SK-N-SH (cell line): ENCODE measurements at regions of chr2 and their contacts with region 1.

Region 1: GRCh38 chr2:173448938-173449471 is 94.3 kb downstream of the CDCA7 start:
- DNase-seq: peak; percentile 77
- H3K4me3 ChIP-seq: peak overlapping the region; percentile 43 to 55
- H3K27ac ChIP-seq: peak overlapping the region in 1 of 2 experiments; percentile 73; a peak in 2 of 4 replicates
- H3K4me1 ChIP-seq: peaks cover 0 to 3% of the 10 kb centered on the region in 2 experiments; a peak in 1 of 4 replicates
- H3K27me3 ChIP-seq: no peaks in the 10 kb centered on the region
- CTCF ChIP-seq: peak; percentile 73
- EP300 ChIP-seq: no peak
- RAD21 ChIP-seq: peak; percentile 72

Region 2: DNA sequence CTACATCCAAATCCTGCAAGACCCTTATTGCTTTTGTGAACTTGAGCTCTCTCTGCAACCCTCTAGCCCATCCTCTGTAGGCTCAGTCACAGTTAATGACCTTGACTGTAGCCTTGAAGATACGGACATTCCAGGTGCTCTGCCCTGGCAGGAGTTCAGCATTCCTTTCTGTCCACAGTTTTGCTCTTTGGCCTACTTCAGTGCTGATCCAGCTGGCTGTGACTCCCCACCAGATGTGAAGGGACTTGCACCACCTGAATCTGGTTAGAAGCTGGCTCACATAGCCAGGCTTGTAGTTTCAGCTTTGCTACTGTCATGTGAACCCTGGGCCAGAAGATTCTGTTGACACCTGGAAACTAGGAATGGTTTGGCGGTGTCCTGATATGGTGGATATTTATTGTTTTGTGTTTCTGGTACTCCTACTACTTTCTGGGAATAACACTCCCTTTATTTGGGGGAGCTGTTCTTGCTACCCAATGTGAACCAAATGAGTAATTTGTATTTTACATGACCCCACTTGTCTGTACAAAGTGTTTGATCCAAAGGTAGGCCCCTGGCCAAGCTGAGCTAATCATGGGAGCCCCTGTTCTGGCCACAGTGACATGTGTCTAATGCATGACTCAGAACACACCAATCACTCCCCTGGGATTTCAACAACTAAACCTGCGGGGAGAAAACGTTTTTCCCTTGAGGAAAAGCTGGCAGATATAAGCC is 21.0 kb before region 1 on chr2:
- CTCF ChIA-PET with region 1: interaction called, 12 read pairs
- POLR2A ChIA-PET with region 1: no interaction called
- DNase-seq: no peak
- H3K4me3 ChIP-seq: no peak overlapping the region
- H3K27ac ChIP-seq: no peak overlapping the region
- H3K4me1 ChIP-seq: no peaks in the 10 kb centered on the region; a peak in 1 of 4 replicates
- H3K27me3 ChIP-seq: no peaks in the 10 kb centered on the region; the same call in 1 of the 2 replicates
- CTCF ChIP-seq: no peak
- EP300 ChIP-seq: no peak
- RAD21 ChIP-seq: no peak

Region 3: GRCh38 chr2:173458991-173459780 is 10.2 kb after region 1 on chr2:
- CTCF ChIA-PET with region 1: interaction called, 12 read pairs
- POLR2A ChIA-PET with region 1: interaction called, 3 read pairs
- DNase-seq: peak; percentile 56
- H3K4me3 ChIP-seq: no peak overlapping the region
- H3K27ac ChIP-seq: no peak overlapping the region
- H3K4me1 ChIP-seq: peaks cover 0 to 7% of the 10 kb centered on the region in 2 experiments; a peak in 1 of 4 replicates
- H3K27me3 ChIP-seq: no peaks in the 10 kb centered on the region; the same call in 1 of the 2 replicates
- CTCF ChIP-seq: no peak
- EP300 ChIP-seq: no peak
- RAD21 ChIP-seq: no peak